Psoas muscle (tissue), 8 donors: ENCODE measurements at regions of chr4 and their contacts with region 1.

Region 1: GRCh38 chr4:25172961-25173915 is 13.0 kb upstream of the SEPSECS start:
- DNase-seq: no peak
- ATAC-seq: peak; percentile 98 to 100 (median 99)
- H3K4me3 ChIP-seq: no peak overlapping the region
- H3K27ac ChIP-seq: peak overlapping the region; percentile 75
- H3K4me1 ChIP-seq: peaks cover 19% of the 10 kb centered on the region
- H3K27me3 ChIP-seq: no peaks in the 10 kb centered on the region
- CTCF ChIP-seq: no peak

Region 2: DNA sequence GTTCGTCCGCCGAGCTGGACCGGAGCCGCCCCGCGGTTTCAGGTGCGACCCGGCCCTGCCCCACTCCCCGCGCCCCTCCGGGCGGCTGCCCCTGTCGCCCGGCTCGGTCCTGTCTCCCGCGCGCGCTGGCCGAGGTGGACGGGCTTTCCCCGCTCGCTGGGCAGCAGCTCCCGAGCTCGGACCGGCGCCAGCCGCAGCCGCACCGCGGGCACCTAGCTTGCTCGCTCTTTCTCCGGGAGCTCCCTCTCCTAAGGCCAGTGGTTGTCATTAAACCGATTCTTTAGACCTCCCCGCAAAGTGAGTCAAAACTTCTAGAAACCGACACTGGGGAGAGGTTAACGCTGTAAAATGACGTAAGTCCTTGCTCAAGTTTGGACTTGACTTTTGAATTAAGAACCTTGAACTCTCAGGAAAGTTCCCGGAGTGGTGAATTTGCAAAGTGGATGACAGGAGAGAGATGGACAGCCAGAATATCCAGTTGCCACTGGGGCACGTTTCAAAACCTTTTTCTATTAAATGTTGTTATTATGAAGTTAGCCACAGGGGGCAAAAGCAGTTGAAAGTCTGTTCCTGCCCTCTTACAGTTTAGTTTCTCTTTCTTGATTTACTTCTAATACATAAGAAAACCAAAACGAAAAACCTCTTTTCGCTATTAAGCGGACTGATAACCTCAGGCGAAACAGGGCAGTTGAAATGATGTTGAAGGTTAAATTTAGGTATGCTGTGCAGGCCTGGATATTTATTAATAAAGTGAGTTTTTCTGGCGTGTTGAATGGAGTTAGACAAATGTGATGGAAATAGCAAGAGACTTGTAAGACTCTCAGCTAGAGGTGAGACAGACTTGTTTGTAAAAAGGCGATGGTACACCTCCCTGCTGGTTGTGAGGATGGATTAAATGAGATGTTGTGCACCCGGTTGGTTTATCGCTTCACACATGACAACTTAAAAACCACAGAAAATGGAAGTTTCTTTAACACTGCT is 61.4 kb after region 1 on chr4:
- intact Hi-C with region 1: loop called in 1 of 2 experiments (anchors 5 kb)
- DNase-seq: peak; percentile 44 to 77
- ATAC-seq: peak; percentile 62 to 73 (median 68)
- H3K4me3 ChIP-seq: peak overlapping the region; percentile 99
- H3K27ac ChIP-seq: peak overlapping the region; percentile 93
- H3K4me1 ChIP-seq: peaks cover 9% of the 10 kb centered on the region
- H3K27me3 ChIP-seq: no peaks in the 10 kb centered on the region
- CTCF ChIP-seq: peak; percentile 54

Region 3: DNA sequence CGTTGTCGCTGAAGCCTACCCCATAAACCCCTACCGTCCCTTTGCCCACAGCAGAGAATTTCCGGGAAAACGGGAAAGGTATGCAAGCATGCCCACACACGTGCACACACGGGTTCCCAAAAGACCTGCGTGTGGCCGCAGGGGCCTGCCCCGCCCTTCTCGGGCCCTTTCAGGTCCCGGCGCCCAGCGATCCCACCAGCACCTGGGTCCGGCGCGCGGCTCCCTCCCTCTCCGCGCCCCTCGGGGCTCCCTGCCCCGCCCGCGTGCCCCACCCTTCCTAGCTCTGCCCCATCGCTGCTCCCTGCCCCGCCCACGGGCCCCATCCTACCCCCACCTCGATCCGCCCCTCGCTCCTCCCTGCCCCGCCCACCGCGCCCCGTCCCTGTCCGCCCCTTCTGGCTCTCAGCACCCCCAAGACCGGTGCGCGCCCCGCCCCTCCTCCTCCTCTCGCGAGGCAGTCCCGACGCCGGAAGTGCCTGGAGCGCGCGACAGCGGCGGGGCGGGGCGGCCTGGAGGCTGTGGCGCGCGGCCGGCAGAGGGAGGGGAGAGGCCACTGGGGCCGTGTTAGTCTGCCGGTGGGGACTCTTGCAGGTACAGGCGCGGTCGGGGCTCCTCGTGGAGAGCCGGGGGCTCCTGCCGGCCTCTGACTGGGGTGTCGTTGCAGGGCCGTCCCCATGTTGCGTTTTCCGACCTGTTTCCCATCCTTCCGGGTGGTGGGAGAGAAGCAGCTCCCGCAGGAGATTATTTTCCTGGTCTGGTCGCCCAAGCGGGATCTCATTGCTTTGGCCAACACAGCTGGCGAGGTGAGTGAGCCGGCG is 203.7 kb after region 1 on chr4 and contains the start of gene ANAPC4:
- intact Hi-C with region 1: loop called (anchors 10 kb)
- DNase-seq: peak; percentile 97
- ATAC-seq: peak; percentile 94 to 98 (median 97)
- H3K4me3 ChIP-seq: peak within 1 kb of the TSS; percentile 98
- H3K27ac ChIP-seq: peak within 1 kb of the TSS; percentile 81
- H3K4me1 ChIP-seq: peaks cover 19% of the 10 kb centered on the region
- H3K27me3 ChIP-seq: no peaks in the 10 kb centered on the region
- CTCF ChIP-seq: no peak
- total RNA-seq, gene ANAPC4: 9.0 to 14.7 (median 12.6) TPM

Region 4: DNA sequence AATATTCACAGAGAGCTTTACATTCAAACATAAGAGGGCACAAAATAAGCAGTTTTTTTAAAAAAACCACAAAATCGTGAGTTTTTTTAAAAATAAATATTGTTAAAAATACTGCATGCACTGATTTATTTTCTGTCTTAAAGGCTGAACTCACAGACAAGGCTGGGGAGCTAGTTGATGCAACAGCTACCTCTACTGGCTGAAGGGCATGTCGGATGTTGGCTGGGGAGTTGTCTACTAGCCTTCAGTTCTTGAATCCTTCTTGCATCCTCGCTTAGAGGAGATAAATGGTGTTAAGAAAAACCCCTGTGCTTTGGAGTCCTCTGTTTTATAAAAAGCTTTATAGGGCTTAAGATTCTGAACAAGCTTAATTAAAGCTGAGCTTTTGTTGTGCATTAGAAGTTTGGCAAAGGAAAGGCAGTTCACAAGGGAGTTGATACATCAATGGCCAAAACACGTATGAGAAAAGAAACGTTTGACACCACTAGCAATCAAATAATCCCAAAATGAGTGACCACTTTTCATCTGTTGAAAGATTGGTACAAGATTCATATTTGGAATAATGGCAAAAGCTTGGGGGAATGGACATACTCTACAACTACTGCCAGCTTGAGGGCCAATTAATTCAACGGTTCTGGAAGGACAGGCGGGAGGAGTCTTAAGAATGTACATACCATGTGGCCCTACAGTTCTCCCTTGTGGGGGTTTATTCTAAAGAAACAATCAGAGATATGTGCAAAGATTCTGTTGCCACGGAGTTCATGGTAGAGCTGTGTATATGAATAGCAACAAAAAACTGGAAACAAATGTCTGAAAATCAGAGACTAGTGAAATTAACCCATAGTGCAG is 594.9 kb after region 1 on chr4:
- intact Hi-C with region 1: loop called in 1 of 2 experiments (anchors 10 kb)
- DNase-seq: peak in 1 of 2 donors; percentile 22
- ATAC-seq: peak; percentile 60 to 86 (median 74)
- H3K4me3 ChIP-seq: no peak overlapping the region
- H3K27ac ChIP-seq: no peak overlapping the region
- H3K4me1 ChIP-seq: no peaks in the 10 kb centered on the region
- H3K27me3 ChIP-seq: no peaks in the 10 kb centered on the region
- CTCF ChIP-seq: peak; percentile 70